Heart right ventricle (tissue), 16 donors: ENCODE measurements at regions of chr1 and their contacts with region 1.

Region 1: GRCh38 chr1:243713470-243714186 is 136.4 kb downstream of the AKT3 start:
- DNase-seq: peak in 1 of 2 donors; percentile 17
- ATAC-seq: peak in 7 of 8 donors; percentile 31 to 89 (median 83)
- H3K4me3 ChIP-seq: peak overlapping the region in 3 of 10 donors; percentile 5 to 25 (median 11)
- H3K27ac ChIP-seq: peak overlapping the region in 3 of 10 donors; percentile 3 to 22 (median 10)
- H3K4me1 ChIP-seq: peaks cover 0 to 38% (median 11%) of the 10 kb centered on the region in 9 donors
- H3K27me3 ChIP-seq: no peaks in the 10 kb centered on the region
- CTCF ChIP-seq: no peak

Region 2: DNA sequence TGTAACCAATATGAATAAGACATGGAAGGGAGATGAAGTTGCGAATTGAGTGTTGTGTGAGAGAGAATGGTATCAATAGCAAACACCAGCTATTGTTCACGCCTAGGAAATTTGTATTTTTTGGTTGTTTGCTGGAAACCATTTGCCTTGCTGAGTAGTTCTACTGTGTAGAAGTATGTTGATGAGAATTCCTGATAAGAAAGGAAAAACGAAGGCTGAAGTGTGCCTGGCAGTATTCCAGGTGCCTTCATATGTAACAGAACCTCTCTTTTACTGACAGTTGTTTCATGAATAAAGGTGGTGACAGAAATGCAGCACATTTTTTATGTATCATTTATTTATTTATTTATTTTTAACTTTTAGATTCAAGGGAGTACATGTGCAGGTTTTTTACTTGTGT is 378.3 kb before region 1 on chr1:
- intact Hi-C with region 1: no loop called
- DNase-seq: no peak
- ATAC-seq: no peak
- H3K4me3 ChIP-seq: no peak overlapping the region
- H3K27ac ChIP-seq: no peak overlapping the region
- H3K4me1 ChIP-seq: no peaks in the 10 kb centered on the region
- H3K27me3 ChIP-seq: no peaks in the 10 kb centered on the region
- CTCF ChIP-seq: no peak

Region 3: GRCh38 chr1:243742819-243743218 is 29.2 kb after region 1 on chr1:
- intact Hi-C with region 1: loop called in 2 of 10 experiments (anchors 2 to 5 kb)
- DNase-seq: no peak
- ATAC-seq: peak in 4 of 8 donors; percentile 25 to 76 (median 46)
- H3K4me3 ChIP-seq: no peak overlapping the region
- H3K27ac ChIP-seq: peak overlapping the region in 1 of 10 donors; percentile 41
- H3K4me1 ChIP-seq: peaks cover 0 to 28% (median 11%) of the 10 kb centered on the region in 9 donors
- H3K27me3 ChIP-seq: no peaks in the 10 kb centered on the region
- CTCF ChIP-seq: no peak

Region 4: DNA sequence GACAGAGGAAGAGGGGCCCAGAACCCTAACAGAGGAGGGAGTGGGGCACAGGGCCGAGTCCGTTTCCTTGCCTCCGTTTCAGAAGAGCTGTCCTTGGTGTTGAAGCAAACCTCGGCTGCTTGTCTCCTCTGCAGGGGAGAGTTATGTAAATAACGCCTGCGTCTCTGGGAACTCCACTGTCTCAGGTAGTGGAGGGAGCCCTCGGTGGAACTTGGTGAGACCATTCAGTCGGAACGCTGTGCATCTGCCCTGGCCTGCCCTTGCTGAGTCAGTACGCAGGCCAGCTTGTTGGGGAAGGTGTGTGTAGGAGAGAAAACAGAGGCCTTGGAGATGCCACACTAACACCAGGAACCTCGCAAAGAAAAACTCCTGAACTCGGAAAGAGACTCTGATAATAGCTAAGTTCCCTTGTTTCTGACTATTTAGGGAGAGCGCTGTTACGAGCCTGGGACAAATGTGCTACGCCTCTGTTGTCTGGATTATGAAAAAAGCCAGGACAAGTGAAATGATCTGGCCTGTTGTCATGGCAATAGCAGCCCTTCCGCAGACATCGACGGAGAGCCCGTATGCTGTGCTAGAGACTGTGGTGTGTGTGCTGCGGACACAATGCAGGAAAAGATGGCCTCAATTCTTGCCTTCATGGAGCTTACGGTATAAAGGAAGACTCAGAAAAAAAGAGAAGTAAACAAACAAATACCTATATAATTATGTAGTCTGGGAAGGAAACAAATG is 231.0 kb after region 1 on chr1:
- intact Hi-C with region 1: no loop called
- DNase-seq: no peak
- ATAC-seq: no peak
- H3K4me3 ChIP-seq: no peak overlapping the region
- H3K27ac ChIP-seq: no peak overlapping the region
- H3K4me1 ChIP-seq: peaks cover 0 to 10% (median 0%) of the 10 kb centered on the region in 9 donors
- H3K27me3 ChIP-seq: peaks cover 0 to 20% (median 0%) of the 10 kb centered on the region in 7 donors
- CTCF ChIP-seq: no peak